A549 (cell line): ENCODE measurements at regions of chr20 and their contacts with region 1.

Region 1: GRCh38 chr20:40933758-40934157 is 94.9 kb upstream of the TOP1 start:
- DNase-seq: no peak
- ATAC-seq: no peak
- H3K4me3 ChIP-seq: no peak overlapping the region
- H3K27ac ChIP-seq: no peak overlapping the region
- H3K4me1 ChIP-seq: no peaks in the 10 kb centered on the region
- CTCF ChIP-seq: no peak
- EP300 ChIP-seq: no peak
- POLR2A ChIP-seq: no peak
- RAD21 ChIP-seq: no peak

Region 2: GRCh38 chr20:40913224-40914185 is 20.3 kb before region 1 on chr20:
- CTCF ChIA-PET with region 1: no interaction called
- POLR2A ChIA-PET with region 1: no interaction called
- DNase-seq: no peak
- ATAC-seq: no peak
- H3K4me3 ChIP-seq: no peak overlapping the region
- H3K27ac ChIP-seq: no peak overlapping the region
- H3K4me1 ChIP-seq: no peaks in the 10 kb centered on the region
- CTCF ChIP-seq: no peak
- EP300 ChIP-seq: no peak
- POLR2A ChIP-seq: no peak
- RAD21 ChIP-seq: no peak

Region 3: DNA sequence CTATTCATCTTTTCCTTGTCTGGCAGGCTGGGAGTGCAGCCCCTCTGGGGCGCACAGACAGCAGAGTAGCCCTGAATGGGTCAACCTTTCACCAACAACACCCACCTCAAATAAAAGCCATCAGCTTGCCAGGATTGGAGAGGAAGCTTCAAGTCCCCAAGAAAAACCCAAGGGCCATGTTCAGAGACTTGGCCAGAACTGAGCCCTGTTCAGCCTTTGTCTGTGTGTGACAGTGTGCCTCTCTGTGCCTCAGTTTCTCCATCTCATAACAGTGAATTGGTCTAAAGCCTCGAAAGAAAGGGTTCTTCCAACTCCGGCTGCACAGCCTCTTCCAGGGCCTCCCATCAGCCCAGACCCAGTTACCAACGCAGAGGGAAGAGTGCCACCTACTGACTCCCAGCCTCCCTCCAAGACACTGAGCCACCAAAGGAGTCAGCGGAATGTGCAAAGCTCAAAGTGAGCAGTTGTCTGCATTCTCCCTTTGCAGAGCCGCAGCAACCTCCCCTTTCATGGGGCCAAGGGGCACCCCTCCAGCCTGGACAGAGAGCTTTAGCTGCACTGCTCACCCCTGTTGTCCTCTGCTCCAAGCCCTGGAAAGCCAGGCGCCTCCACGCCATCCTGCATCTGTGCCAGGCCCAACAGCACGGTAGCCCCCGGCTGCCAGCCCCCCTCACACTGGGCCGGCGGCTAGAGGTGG is 12.1 kb after region 1 on chr20:
- CTCF ChIA-PET with region 1: interaction called, 10 read pairs
- POLR2A ChIA-PET with region 1: no interaction called
- DNase-seq: peak; percentile 40 to 59
- ATAC-seq: peak; percentile 93 to 97
- H3K4me3 ChIP-seq: no peak overlapping the region
- H3K27ac ChIP-seq: no peak overlapping the region
- H3K4me1 ChIP-seq: no peaks in the 10 kb centered on the region
- CTCF ChIP-seq: peak; percentile 42
- EP300 ChIP-seq: no peak
- POLR2A ChIP-seq: no peak
- RAD21 ChIP-seq: peak; percentile 51 to 77

Region 4: GRCh38 chr20:41028348-41029148 is 94.8 kb after region 1 on chr20 and contains the start of gene TOP1:
- CTCF ChIA-PET with region 1: no interaction called
- POLR2A ChIA-PET with region 1: no interaction called
- DNase-seq: peak; percentile 97 to 100
- ATAC-seq: peak; percentile 95 to 97
- H3K4me3 ChIP-seq: peak within 1 kb of the TSS; percentile 92
- H3K27ac ChIP-seq: peak within 1 kb of the TSS; percentile 86 to 98
- H3K4me1 ChIP-seq: peaks cover 40% of the 10 kb centered on the region
- CTCF ChIP-seq: no peak
- EP300 ChIP-seq: no peak
- POLR2A ChIP-seq: peak; percentile 87
- RAD21 ChIP-seq: no peak; a peak in 1 of 5 replicates
- polyA plus RNA-seq, gene TOP1: 20.8 and 28.3 TPM in 2 replicates